CD4-positive, alpha-beta memory T cell (primary cell): ENCODE measurements at regions of chr17 and their contacts with region 1.

Region 1: GRCh38 chr17:76103274-76104139 is at the start of gene EXOC7:
- DNase-seq: peak; percentile 88 to 95 (median 92)
- H3K4me3 ChIP-seq: peak within 1 kb of the TSS; percentile 84 to 86
- H3K4me3 Mint-ChIP-seq: peak within 1 kb of the TSS; percentile 92 to 98 (median 96)
- H3K27ac ChIP-seq: peak within 1 kb of the TSS; percentile 86
- H3K27ac Mint-ChIP-seq: peak within 1 kb of the TSS; percentile 95 to 99 (median 97)
- H3K4me1 ChIP-seq: peaks cover 27% of the 10 kb centered on the region
- H3K4me1 Mint-ChIP-seq: peaks cover 20 to 49% (median 33%) of the 10 kb centered on the region in 4 donors
- H3K27me3 ChIP-seq: no peaks in the 10 kb centered on the region
- H3K27me3 Mint-ChIP-seq: no peaks in the 10 kb centered on the region
- total RNA-seq, gene EXOC7: 183 to 184 TPM

Region 2: GRCh38 chr17:76072148-76072858 is 31.2 kb before region 1 on chr17 and contains the start of gene SRP68:
- CTCF ChIA-PET with region 1: no interaction called
- POLR2A ChIA-PET with region 1: interaction called, 6 read pairs
- intact Hi-C with region 1: loop called (anchors 1 kb)
- DNase-seq: peak; percentile 73 to 80 (median 77)
- H3K4me3 ChIP-seq: peak within 1 kb of the TSS; percentile 81 to 97
- H3K4me3 Mint-ChIP-seq: peak within 1 kb of the TSS; percentile 95 to 98 (median 97)
- H3K27ac ChIP-seq: peak within 1 kb of the TSS; percentile 86
- H3K27ac Mint-ChIP-seq: peak within 1 kb of the TSS; percentile 89 to 98 (median 97)
- H3K4me1 ChIP-seq: peaks cover 56% of the 10 kb centered on the region
- H3K4me1 Mint-ChIP-seq: peaks cover 31 to 60% (median 46%) of the 10 kb centered on the region in 4 donors
- H3K27me3 ChIP-seq: peaks cover 22% of the 10 kb centered on the region
- H3K27me3 Mint-ChIP-seq: peaks cover 17 to 21% of the 10 kb centered on the region in 2 donors
- total RNA-seq, gene SRP68: 86.5 to 92.4 TPM

Region 3: GRCh38 chr17:76079956-76080767 is 23.3 kb before region 1 on chr17:
- CTCF ChIA-PET with region 1: no interaction called
- POLR2A ChIA-PET with region 1: interaction called, 14 read pairs
- intact Hi-C with region 1: no loop called
- DNase-seq: no peak
- H3K4me3 ChIP-seq: no peak overlapping the region
- H3K4me3 Mint-ChIP-seq: peak overlapping the region in 1 of 8 donors; percentile 16
- H3K27ac ChIP-seq: no peak overlapping the region
- H3K27ac Mint-ChIP-seq: peak overlapping the region in 3 of 7 donors; percentile 22 to 56 (median 29)
- H3K4me1 ChIP-seq: peaks cover 33% of the 10 kb centered on the region
- H3K4me1 Mint-ChIP-seq: peaks cover 20 to 49% (median 35%) of the 10 kb centered on the region in 4 donors
- H3K27me3 ChIP-seq: peaks cover 24% of the 10 kb centered on the region
- H3K27me3 Mint-ChIP-seq: peaks cover 11 to 12% of the 10 kb centered on the region in 2 donors

Region 4: GRCh38 chr17:76091526-76092285 is 11.8 kb before region 1 on chr17:
- CTCF ChIA-PET with region 1: interaction called, 3 read pairs
- POLR2A ChIA-PET with region 1: interaction called, 24 read pairs
- intact Hi-C with region 1: no loop called
- DNase-seq: peak in 1 of 5 donors; percentile 20
- H3K4me3 ChIP-seq: no peak overlapping the region
- H3K4me3 Mint-ChIP-seq: peak overlapping the region in 5 of 8 donors; percentile 44 to 65 (median 57)
- H3K27ac ChIP-seq: no peak overlapping the region
- H3K27ac Mint-ChIP-seq: peak overlapping the region in 5 of 7 donors; percentile 36 to 92 (median 79)
- H3K4me1 ChIP-seq: no peaks in the 10 kb centered on the region
- H3K4me1 Mint-ChIP-seq: peaks cover 1 to 15% (median 3%) of the 10 kb centered on the region in 4 donors
- H3K27me3 ChIP-seq: no peaks in the 10 kb centered on the region
- H3K27me3 Mint-ChIP-seq: no peaks in the 10 kb centered on the region

Region 5: GRCh38 chr17:76271669-76272540 is 168.4 kb after region 1 on chr17:
- CTCF ChIA-PET with region 1: no interaction called
- POLR2A ChIA-PET with region 1: interaction called, 11 read pairs
- intact Hi-C with region 1: no loop called
- DNase-seq: peak; percentile 56 to 85 (median 59)
- H3K4me3 ChIP-seq: peak overlapping the region in 1 of 2 donors; percentile 68
- H3K4me3 Mint-ChIP-seq: peak overlapping the region; percentile 78 to 90 (median 82)
- H3K27ac ChIP-seq: peak overlapping the region; percentile 89
- H3K27ac Mint-ChIP-seq: peak overlapping the region; percentile 86 to 96 (median 92)
- H3K4me1 ChIP-seq: peaks cover 79% of the 10 kb centered on the region
- H3K4me1 Mint-ChIP-seq: peaks cover 21 to 86% (median 48%) of the 10 kb centered on the region in 4 donors
- H3K27me3 ChIP-seq: no peaks in the 10 kb centered on the region
- H3K27me3 Mint-ChIP-seq: no peaks in the 10 kb centered on the region

Region 6: DNA sequence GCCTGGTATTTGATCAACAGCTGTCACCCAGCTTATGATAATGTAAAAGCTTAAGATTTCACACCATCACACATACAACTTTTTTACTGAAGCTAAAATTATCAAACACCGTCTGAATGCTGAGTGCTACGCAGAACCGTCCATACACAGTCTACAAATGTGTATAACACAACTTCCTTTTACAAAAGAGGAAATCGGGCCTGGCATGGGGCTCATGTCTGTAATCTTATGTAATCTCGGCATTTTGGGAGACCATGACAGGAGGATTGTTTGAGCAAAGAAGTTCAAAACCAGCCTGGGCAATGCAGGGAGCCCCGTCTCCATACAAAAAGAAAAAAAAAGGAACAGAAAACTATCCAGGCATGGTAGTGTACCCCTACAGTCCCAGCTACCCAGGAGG is 224.2 kb after region 1 on chr17:
- CTCF ChIA-PET with region 1: no interaction called
- POLR2A ChIA-PET with region 1: no interaction called
- intact Hi-C with region 1: no loop called
- DNase-seq: no peak
- H3K4me3 ChIP-seq: no peak overlapping the region
- H3K4me3 Mint-ChIP-seq: no peak overlapping the region
- H3K27ac ChIP-seq: no peak overlapping the region
- H3K27ac Mint-ChIP-seq: no peak overlapping the region
- H3K4me1 ChIP-seq: no peaks in the 10 kb centered on the region
- H3K4me1 Mint-ChIP-seq: peaks cover 0 to 5% (median 3%) of the 10 kb centered on the region in 4 donors
- H3K27me3 ChIP-seq: no peaks in the 10 kb centered on the region
- H3K27me3 Mint-ChIP-seq: no peaks in the 10 kb centered on the region

Region 7: DNA sequence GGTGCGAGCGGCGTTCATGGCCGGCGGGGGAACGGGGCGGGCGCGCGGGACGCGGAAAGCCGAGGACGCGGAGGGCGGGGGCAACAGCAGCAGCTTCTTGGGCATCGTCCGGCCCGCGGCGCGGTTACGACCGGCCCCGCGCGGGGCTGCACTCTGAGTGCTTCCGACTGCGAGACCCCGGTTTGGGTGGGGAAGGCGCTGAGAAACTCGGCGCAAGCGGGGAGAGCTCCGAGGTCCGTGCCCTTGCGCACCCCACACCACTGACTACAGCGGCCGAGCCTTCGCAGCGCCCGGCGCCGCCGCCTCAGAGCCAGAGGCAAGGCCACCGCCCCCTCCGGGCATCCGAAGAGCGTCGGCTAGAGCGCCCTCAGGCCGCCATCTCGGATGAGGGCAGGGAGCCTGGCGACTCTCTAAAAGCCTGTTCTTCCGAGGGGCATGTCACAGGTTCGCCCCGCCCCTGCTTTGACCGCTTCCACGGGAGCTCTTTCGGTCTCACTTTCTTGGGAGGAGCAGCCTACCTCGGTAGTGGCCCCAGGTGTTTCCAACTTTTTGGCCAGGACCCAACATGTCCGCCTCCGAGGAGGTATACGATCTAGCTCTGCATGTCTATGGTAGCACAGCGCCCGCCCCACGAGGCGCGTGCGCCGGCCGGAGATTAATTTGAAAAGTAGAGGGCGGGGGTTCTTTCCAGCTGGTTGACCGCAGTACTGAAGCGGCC is 250.3 kb after region 1 on chr17 and contains the start of gene PRPSAP1:
- CTCF ChIA-PET with region 1: no interaction called
- POLR2A ChIA-PET with region 1: interaction called, 15 read pairs
- intact Hi-C with region 1: no loop called
- DNase-seq: peak; percentile 82 to 90 (median 85)
- H3K4me3 ChIP-seq: peak within 1 kb of the TSS; percentile 52 to 88
- H3K4me3 Mint-ChIP-seq: peak within 1 kb of the TSS; percentile 92 to 99 (median 96)
- H3K27ac ChIP-seq: peak within 1 kb of the TSS; percentile 77
- H3K27ac Mint-ChIP-seq: peak within 1 kb of the TSS; percentile 82 to 99 (median 98)
- H3K4me1 ChIP-seq: peaks cover 16% of the 10 kb centered on the region
- H3K4me1 Mint-ChIP-seq: peaks cover 12 to 29% (median 20%) of the 10 kb centered on the region in 4 donors
- H3K27me3 ChIP-seq: no peaks in the 10 kb centered on the region
- H3K27me3 Mint-ChIP-seq: no peaks in the 10 kb centered on the region
- total RNA-seq, gene PRPSAP1: 63.4 to 65.8 TPM